Left cardiac atrium (tissue), 4 donors: ENCODE measurements at regions of chr9 and their contacts with region 1.

Region 1: DNA sequence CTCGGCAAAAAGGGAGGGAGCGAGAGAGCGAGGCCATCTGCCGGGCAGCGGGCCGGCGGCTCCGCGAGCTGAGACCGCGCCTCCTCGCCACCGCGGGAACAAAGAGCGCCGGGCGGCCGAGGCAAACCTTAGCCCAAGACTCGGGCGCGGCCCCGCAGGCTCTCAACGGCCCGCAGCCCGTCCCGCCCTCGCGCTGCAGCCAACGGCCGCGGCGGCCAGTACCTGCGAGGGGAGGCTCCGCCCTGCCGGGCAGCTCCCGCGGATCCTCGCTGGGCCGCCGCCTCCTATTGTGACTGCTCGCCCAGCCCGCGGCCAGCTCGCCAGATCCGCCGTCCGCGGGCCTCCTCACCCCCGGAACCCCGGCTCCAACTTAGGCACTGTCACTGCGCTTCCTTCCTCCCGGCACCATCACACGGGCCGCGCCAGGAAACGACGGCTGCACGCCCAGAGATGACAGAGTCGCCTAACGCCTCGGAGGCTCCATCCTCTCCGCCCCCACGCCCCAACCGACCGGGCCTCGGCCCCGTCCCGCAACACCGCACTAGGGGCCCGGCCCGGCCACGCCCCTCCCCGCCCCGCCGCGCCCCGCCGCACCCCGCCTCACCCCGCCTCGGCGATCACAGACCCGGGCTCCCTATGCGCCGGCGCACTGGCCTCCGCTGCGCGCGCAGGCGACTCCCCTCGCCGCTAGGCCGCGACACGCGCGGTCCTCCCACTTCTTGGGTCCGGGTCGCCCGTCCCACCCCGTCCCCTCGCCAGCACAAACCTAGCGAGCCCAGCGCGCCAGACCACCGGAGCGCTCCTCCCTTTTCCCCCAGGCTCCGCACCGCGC is 479 bp upstream of the RNF38 start:
- DNase-seq: peak; percentile 89
- ATAC-seq: peak; percentile 95 to 96

Region 2: GRCh38 chr9:36450110-36450732 is 49.7 kb after region 1 on chr9:
- intact Hi-C with region 1: loop called in 1 of 2 experiments (anchors 5 kb)
- DNase-seq: no peak
- ATAC-seq: no peak

Region 3: DNA sequence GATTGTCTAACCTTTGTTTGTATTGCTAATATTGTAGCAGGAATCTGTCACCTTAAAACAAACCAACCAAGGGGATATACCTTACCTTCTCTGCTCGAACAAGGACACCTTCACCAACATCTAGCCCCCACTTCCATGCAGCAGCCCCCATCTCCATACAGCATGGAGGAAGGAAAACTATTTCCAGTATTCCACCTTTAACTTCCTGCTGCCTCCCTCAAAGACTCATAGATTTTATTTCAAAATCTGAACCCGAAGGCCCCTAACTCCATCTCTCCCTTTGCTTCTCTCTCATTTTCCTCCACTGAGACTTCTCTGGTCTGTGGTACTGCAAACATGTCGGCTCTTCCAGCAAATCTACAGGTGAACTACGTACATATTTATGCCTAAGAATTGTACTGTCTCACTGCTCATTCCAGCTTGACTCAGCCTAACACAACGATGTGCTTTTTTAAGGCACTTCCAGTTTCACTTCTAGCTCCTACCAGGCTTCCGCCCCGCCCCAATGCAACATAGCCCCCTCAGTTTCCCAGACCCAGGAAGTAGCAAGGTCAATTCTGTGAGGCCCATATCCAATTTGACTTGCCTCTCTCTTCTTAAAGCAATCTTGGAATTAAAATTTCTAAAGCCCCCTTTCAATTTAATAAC is 70.2 kb after region 1 on chr9:
- intact Hi-C with region 1: no loop called
- DNase-seq: peak; percentile 68
- ATAC-seq: peak; percentile 96 to 97

Region 4: GRCh38 chr9:36487482-36488388 is 87.2 kb after region 1 on chr9:
- intact Hi-C with region 1: loop called in 1 of 2 experiments (anchors 5 kb)
- DNase-seq: peak; percentile 95
- ATAC-seq: peak; percentile 98 to 99

Region 5: DNA sequence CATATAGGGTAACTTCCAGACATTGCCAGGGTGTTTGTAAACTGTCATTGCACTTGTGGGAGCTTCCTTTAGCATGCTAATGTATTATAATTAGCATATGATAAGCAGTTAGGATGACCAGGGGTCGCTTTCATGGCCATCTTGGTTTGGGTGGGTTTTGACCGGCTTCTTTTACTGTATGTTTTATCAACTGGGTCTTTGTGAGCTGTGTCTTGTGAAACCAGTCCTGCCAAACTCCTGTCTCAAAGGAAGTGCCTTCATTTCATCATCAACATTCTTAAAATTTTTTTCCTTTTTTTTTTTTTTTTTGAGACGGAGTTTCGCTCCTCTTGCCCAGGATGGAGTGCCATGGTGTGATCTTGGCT is 160.3 kb after region 1 on chr9:
- intact Hi-C with region 1: loop called in 1 of 2 experiments (anchors 5 kb)
- DNase-seq: no peak
- ATAC-seq: no peak

Region 6: GRCh38 chr9:36659500-36659899 is 259.0 kb after region 1 on chr9:
- intact Hi-C with region 1: no loop called
- DNase-seq: no peak
- ATAC-seq: no peak